ENCODE measurements at regions of chr13 and their contacts with region 1.

Region 1: GRCh38 chr13:59531571-59532091 is 632.1 kb downstream of the DIAPH3 start:
- DNase-seq: peak; percentile 21
- H3K4me3 Mint-ChIP-seq: no peak overlapping the region
- H3K27ac Mint-ChIP-seq: no peak overlapping the region
- H3K4me1 Mint-ChIP-seq: no peaks in the 10 kb centered on the region
- H3K27me3 Mint-ChIP-seq: no peaks in the 10 kb centered on the region
- CTCF ChIP-seq: no peak

Region 2: DNA sequence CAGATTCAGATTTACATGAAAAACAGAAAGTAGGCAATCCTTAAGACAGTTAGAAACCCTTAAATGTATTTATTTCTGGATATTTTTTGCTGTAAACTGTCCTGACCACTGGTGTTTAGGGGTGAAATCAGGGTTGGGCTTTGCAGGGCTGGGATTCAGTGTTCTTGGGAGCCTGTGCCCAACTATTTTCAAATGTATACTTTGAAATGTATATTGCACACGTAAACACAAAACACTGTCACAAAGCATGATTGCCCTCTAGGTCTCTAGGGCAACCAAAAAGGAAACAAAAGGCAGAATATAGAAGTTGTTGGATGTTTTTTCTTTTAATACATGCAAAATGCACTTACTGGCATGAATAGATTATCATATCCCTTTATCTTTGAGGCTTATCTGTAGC is 553.3 kb before region 1 on chr13:
- CTCF ChIA-PET with region 1: no interaction called
- intact Hi-C with region 1: no loop called
- DNase-seq: no peak
- H3K4me3 Mint-ChIP-seq: no peak overlapping the region
- H3K27ac Mint-ChIP-seq: no peak overlapping the region
- H3K4me1 Mint-ChIP-seq: no peaks in the 10 kb centered on the region
- H3K27me3 Mint-ChIP-seq: no peaks in the 10 kb centered on the region
- CTCF ChIP-seq: no peak

Region 3: DNA sequence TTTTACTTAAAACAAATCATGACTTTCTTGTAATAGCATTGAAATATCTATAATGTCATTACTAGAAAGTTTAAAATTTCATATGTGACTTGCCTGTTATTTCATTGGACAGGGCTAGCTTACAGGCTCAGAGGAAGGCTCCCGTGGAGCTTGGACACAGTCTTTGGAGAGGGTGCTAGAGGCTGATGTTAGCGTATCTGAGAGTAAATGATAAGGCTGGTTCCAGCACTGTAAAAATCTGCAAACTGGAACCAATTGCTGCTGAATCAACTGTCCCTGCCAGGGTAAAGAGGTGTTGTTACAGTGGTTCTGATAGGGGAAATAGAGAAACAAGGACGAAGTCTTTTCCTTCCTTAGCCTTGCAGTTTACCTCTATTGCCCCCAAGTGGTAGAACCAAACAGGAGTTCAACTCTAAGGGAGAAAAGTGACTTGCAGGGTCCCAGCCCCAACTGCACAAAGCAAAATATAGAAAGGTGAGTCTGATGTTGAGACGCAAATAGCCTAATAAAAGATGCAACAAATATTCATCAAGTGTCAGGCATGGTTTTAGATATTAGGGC is 269.6 kb before region 1 on chr13:
- CTCF ChIA-PET with region 1: no interaction called
- intact Hi-C with region 1: no loop called
- DNase-seq: no peak
- H3K4me3 Mint-ChIP-seq: no peak overlapping the region
- H3K27ac Mint-ChIP-seq: no peak overlapping the region
- H3K4me1 Mint-ChIP-seq: no peaks in the 10 kb centered on the region
- H3K27me3 Mint-ChIP-seq: no peaks in the 10 kb centered on the region
- CTCF ChIP-seq: no peak

Region 4: GRCh38 chr13:59607780-59608233 is 76.2 kb after region 1 on chr13:
- CTCF ChIA-PET with region 1: no interaction called
- intact Hi-C with region 1: loop called (anchors 5 kb)
- DNase-seq: peak; percentile 1
- H3K4me3 Mint-ChIP-seq: no peak overlapping the region
- H3K27ac Mint-ChIP-seq: peak overlapping the region; percentile 50
- H3K4me1 Mint-ChIP-seq: no peaks in the 10 kb centered on the region
- H3K27me3 Mint-ChIP-seq: no peaks in the 10 kb centered on the region
- CTCF ChIP-seq: no peak